Heart right ventricle (tissue), 16 donors: ENCODE measurements at regions of chr12 and their contacts with region 1.

Region 1: GRCh38 chr12:71746983-71747611 is 7.6 kb upstream of the RAB21 start:
- DNase-seq: peak in 1 of 2 donors; percentile 28
- ATAC-seq: peak; percentile 72 to 88 (median 78)
- H3K4me3 ChIP-seq: no peak overlapping the region
- H3K27ac ChIP-seq: no peak overlapping the region
- H3K4me1 ChIP-seq: peaks cover 0 to 3% (median 0%) of the 10 kb centered on the region in 9 donors
- H3K27me3 ChIP-seq: peaks cover 0 to 14% (median 0%) of the 10 kb centered on the region in 7 donors
- CTCF ChIP-seq: peak; percentile 54 to 83 (median 74)

Region 2: GRCh38 chr12:71415336-71416231 is 331.5 kb before region 1 on chr12:
- intact Hi-C with region 1: loop called (anchors 2 to 10 kb)
- DNase-seq: peak in 1 of 2 donors; percentile 29
- ATAC-seq: peak in 5 of 8 donors; percentile 56 to 78 (median 59)
- H3K4me3 ChIP-seq: no peak overlapping the region
- H3K27ac ChIP-seq: no peak overlapping the region
- H3K4me1 ChIP-seq: no peaks in the 10 kb centered on the region
- H3K27me3 ChIP-seq: no peaks in the 10 kb centered on the region
- CTCF ChIP-seq: peak; percentile 42 to 81 (median 75)

Region 3: DNA sequence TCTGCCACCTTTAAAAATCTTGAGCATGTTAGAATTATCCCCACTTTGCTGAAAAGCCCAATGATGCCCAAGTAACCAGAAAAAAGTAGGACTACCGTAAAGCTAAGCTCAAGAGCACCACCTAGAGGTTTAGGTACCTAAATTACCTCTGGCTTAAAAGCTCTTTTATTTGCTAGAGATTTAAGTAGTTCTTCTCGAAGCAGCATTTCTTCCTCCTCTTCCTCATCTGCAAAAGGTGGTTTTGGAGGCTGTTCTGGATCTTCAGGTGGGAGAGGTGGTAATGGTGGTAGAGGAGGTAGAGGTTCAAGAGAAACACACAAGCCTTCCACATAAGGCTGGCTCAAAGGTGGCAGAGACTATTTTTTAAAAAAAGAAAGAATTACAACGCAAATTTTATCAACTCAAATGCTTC is 110.4 kb before region 1 on chr12:
- intact Hi-C with region 1: loop called in 4 of 10 experiments (anchors 2 to 10 kb)
- DNase-seq: peak in 1 of 2 donors; percentile 19
- ATAC-seq: no peak
- H3K4me3 ChIP-seq: no peak overlapping the region
- H3K27ac ChIP-seq: no peak overlapping the region
- H3K4me1 ChIP-seq: peaks cover 0 to 9% (median 0%) of the 10 kb centered on the region in 9 donors
- H3K27me3 ChIP-seq: no peaks in the 10 kb centered on the region
- CTCF ChIP-seq: peak; percentile 38 to 83 (median 72)

Region 4: DNA sequence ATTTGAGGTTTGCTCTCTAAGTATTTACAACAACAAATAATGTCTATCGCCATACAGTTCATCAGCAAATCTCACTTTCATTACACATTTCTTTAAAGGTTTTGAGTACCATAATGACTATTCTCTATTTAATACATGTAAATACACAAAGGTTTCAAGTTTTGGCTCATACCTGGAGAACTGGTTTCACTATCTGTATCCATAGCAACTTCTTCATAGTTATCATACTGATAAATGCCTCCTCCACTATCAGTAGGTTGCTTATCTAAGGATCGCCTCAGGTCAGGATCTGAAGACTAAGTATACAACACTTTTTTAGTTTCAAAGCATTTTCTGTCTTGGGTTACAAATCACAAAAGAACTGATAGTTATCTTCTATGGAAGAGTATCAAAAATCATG is 104.8 kb before region 1 on chr12:
- intact Hi-C with region 1: loop called in 3 of 10 experiments (anchors 5 to 10 kb)
- DNase-seq: no peak
- ATAC-seq: no peak
- H3K4me3 ChIP-seq: no peak overlapping the region
- H3K27ac ChIP-seq: no peak overlapping the region
- H3K4me1 ChIP-seq: peaks cover 0 to 20% (median 6%) of the 10 kb centered on the region in 9 donors
- H3K27me3 ChIP-seq: no peaks in the 10 kb centered on the region
- CTCF ChIP-seq: no peak

Region 5: GRCh38 chr12:71663561-71664294 is 83.4 kb before region 1 on chr12 and contains the start of gene ZFC3H1:
- intact Hi-C with region 1: loop called in 4 of 10 experiments (anchors 5 to 10 kb)
- DNase-seq: peak; percentile 88 to 97
- ATAC-seq: peak; percentile 96 to 98 (median 97)
- H3K4me3 ChIP-seq: peak within 1 kb of the TSS; percentile 74 to 98 (median 85)
- H3K27ac ChIP-seq: peak within 1 kb of the TSS; percentile 84 to 98 (median 94)
- H3K4me1 ChIP-seq: peaks cover 0 to 37% (median 34%) of the 10 kb centered on the region in 9 donors
- H3K27me3 ChIP-seq: no peaks in the 10 kb centered on the region
- CTCF ChIP-seq: peak in 6 of 9 donors; percentile 12 to 60 (median 36)
- total RNA-seq, gene ZFC3H1: 13.6 to 26.5 (median 17.2) TPM

Region 6: GRCh38 chr12:71685914-71686665 is 61.0 kb before region 1 on chr12 and contains the start of gene TMEM19:
- intact Hi-C with region 1: loop called in 4 of 10 experiments (anchors 5 kb)
- DNase-seq: peak; percentile 90 to 92
- ATAC-seq: peak; percentile 99 to 100 (median 99)
- H3K4me3 ChIP-seq: peak within 1 kb of the TSS; percentile 48 to 78 (median 68)
- H3K27ac ChIP-seq: peak within 1 kb of the TSS; percentile 58 to 96 (median 92)
- H3K4me1 ChIP-seq: peaks cover 0 to 42% (median 29%) of the 10 kb centered on the region in 9 donors
- H3K27me3 ChIP-seq: no peaks in the 10 kb centered on the region
- CTCF ChIP-seq: peak in 6 of 9 donors; percentile 14 to 63 (median 42)
- total RNA-seq, gene TMEM19: 17.4 to 32.2 (median 27.6) TPM